HCT116 (cell line): ENCODE measurements at regions of chr17 and their contacts with region 1.

Region 1: DNA sequence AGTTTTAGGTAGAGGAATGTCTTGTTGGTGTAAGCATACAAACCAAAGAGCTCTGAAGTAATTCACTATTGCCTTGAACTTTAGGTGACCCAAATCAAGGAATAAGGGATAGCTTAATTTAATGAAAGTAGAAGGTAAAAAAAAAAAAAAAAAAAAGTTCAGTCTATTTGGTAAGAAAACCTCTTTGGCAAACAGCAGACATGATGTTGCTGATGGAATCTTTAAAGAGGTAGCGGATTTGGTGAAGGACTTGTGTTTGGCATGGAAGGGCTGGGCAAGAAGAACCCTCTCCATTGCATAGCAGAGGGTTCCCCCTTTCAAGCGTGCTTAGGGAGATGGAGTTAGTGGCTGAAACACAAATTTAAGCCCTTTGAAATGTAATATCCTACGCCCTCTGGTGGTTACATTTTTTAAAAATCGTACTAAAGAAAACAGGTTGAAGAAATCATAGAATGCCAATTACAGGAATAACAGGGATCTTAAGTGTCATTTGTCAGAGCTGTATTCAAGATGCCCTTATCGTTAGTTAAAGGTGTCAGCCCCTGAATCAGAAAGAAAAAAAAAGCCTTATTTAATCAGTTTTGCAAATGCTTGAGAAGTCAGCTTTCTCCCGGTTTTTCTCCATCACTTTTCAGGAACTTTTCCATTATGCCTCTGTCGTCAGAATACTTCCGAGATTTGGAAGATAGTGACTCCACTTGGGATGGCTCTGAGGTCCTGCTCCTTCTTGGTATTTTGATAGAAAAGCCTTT is 383.1 kb downstream of the KCNJ2 start:
- DNase-seq: peak; percentile 29
- ATAC-seq: peak; percentile 77
- H3K4me3 ChIP-seq: no peak overlapping the region
- H3K27ac ChIP-seq: no peak overlapping the region
- H3K4me1 ChIP-seq: no peaks in the 10 kb centered on the region
- H3K27me3 ChIP-seq: no peaks in the 10 kb centered on the region
- CTCF ChIP-seq: peak; percentile 24 to 76 (median 39); a peak in 3 of 6 replicates
- POLR2A ChIP-seq: no peak
- RAD21 ChIP-seq: peak; percentile 58

Region 2: GRCh38 chr17:69567130-69567529 is 985.3 kb before region 1 on chr17:
- CTCF ChIA-PET with region 1: interaction called, 22 read pairs
- POLR2A ChIA-PET with region 1: no interaction called
- RAD21 ChIA-PET with region 1: no interaction called
- intact Hi-C with region 1: loop called (anchors 5 kb)
- DNase-seq: no peak
- ATAC-seq: no peak
- H3K4me3 ChIP-seq: no peak overlapping the region
- H3K27ac ChIP-seq: no peak overlapping the region
- H3K4me1 ChIP-seq: peaks cover 0 to 4% of the 10 kb centered on the region in 2 experiments; a peak in 1 of 4 replicates
- H3K27me3 ChIP-seq: no peaks in the 10 kb centered on the region
- CTCF ChIP-seq: no peak
- POLR2A ChIP-seq: no peak
- RAD21 ChIP-seq: no peak